B cell (primary cell): ENCODE measurements at regions of chr12 and their contacts with region 1.

Region 1: DNA sequence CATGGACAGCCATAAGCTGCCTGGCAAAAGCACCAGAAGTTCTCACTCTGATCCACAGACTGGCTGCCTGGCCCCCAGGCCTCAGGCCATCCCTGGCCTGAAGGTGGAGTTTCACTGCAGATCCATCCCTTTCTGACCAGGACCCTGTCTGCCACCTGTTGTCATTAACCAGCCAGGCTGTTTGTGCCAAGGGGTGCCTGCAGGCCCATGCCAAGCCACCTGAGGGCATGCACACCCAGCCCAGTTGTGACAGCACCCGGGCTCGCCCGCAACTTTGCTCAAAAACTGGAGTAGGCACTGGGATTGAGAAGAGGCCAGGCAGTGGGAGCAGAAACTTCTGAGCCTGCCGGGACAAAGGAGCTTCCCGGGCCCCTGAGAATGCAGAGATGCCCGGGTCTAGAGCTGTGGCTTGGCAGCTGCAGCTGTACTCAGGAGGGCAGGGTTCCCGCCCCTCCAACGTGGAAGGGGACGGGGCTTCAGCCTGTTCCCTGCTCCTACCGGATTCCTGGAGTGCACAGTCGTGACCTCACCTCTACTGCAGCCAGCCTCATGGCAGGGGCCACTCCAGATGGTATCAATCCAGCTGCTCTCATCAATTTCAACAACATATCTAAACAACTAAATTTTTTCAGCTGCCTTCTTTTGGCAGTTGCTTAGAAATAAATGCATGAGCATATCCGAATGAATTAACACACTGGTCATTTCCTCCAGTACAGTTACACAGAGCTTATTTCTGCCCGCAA is 1277.3 kb downstream of the SLC16A7 start:
- DNase-seq: no peak
- ATAC-seq: no peak
- H3K4me3 ChIP-seq: no peak overlapping the region
- H3K4me3 Mint-ChIP-seq: no peak overlapping the region
- H3K27ac ChIP-seq: no peak overlapping the region
- H3K27ac Mint-ChIP-seq: no peak overlapping the region
- H3K4me1 ChIP-seq: no peaks in the 10 kb centered on the region
- H3K4me1 Mint-ChIP-seq: no peaks in the 10 kb centered on the region
- H3K27me3 ChIP-seq: no peaks in the 10 kb centered on the region
- H3K27me3 Mint-ChIP-seq: no peaks in the 10 kb centered on the region
- CTCF ChIP-seq: no peak

Region 2: GRCh38 chr12:60947533-60947932 is 74.4 kb after region 1 on chr12:
- CTCF ChIA-PET with region 1: no interaction called
- POLR2A ChIA-PET with region 1: interaction called, 10 read pairs
- intact Hi-C with region 1: no loop called
- DNase-seq: no peak
- ATAC-seq: no peak
- H3K4me3 ChIP-seq: no peak overlapping the region
- H3K4me3 Mint-ChIP-seq: no peak overlapping the region
- H3K27ac ChIP-seq: no peak overlapping the region
- H3K27ac Mint-ChIP-seq: no peak overlapping the region
- H3K4me1 ChIP-seq: no peaks in the 10 kb centered on the region
- H3K4me1 Mint-ChIP-seq: no peaks in the 10 kb centered on the region
- H3K27me3 ChIP-seq: no peaks in the 10 kb centered on the region
- H3K27me3 Mint-ChIP-seq: no peaks in the 10 kb centered on the region
- CTCF ChIP-seq: no peak

Region 3: GRCh38 chr12:60977966-60978365 is 104.8 kb after region 1 on chr12:
- CTCF ChIA-PET with region 1: no interaction called
- POLR2A ChIA-PET with region 1: no interaction called
- intact Hi-C with region 1: no loop called
- DNase-seq: no peak
- ATAC-seq: no peak
- H3K4me3 ChIP-seq: no peak overlapping the region
- H3K4me3 Mint-ChIP-seq: no peak overlapping the region
- H3K27ac ChIP-seq: no peak overlapping the region
- H3K27ac Mint-ChIP-seq: no peak overlapping the region
- H3K4me1 ChIP-seq: no peaks in the 10 kb centered on the region
- H3K4me1 Mint-ChIP-seq: no peaks in the 10 kb centered on the region
- H3K27me3 ChIP-seq: no peaks in the 10 kb centered on the region
- H3K27me3 Mint-ChIP-seq: no peaks in the 10 kb centered on the region
- CTCF ChIP-seq: no peak